Activated CD4-positive, alpha-beta T cell treated with anti-CD3 and anti-CD28 coated beads for 36 hours (primary cell): ENCODE measurements at regions of chr22 and their contacts with region 1.

Region 1: DNA sequence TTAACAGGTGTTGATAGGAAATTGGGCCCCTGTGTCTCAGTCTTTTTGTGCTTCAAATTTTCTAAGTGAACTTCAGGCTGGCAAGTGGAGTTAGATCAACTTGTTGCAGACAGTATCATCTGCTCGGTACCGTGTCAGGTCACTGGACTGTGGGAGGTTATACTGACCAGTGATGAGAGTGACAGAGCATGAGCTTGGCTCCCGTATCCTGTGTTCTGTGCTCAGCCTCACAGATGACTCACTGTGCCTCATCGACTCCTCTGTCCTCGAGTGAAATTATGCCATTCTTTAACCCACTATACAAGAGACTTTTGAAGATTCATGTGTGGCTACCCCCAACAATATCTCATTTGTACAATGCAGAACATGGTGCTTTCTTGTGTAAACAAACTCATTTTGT is 7.9 kb downstream of the GRAP2 start:
- DNase-seq: peak; percentile 71
- ATAC-seq: peak; percentile 50
- H3K4me3 Mint-ChIP-seq: peak overlapping the region; percentile 86
- H3K27ac Mint-ChIP-seq: peak overlapping the region; percentile 100
- H3K4me1 Mint-ChIP-seq: peaks cover 75% of the 10 kb centered on the region
- H3K27me3 Mint-ChIP-seq: no peaks in the 10 kb centered on the region

Region 2: GRCh38 chr22:39723899-39724351 is 184.8 kb before region 1 on chr22:
- CTCF ChIA-PET with region 1: no interaction called
- POLR2A ChIA-PET with region 1: no interaction called
- intact Hi-C with region 1: no loop called
- DNase-seq: no peak
- ATAC-seq: no peak
- H3K4me3 Mint-ChIP-seq: no peak overlapping the region
- H3K27ac Mint-ChIP-seq: no peak overlapping the region
- H3K4me1 Mint-ChIP-seq: no peaks in the 10 kb centered on the region
- H3K27me3 Mint-ChIP-seq: no peaks in the 10 kb centered on the region

Region 3: GRCh38 chr22:39839917-39840510 is 68.7 kb before region 1 on chr22:
- CTCF ChIA-PET with region 1: no interaction called
- POLR2A ChIA-PET with region 1: no interaction called
- intact Hi-C with region 1: loop called (anchors 2 kb)
- DNase-seq: peak; percentile 64
- ATAC-seq: peak; percentile 100
- H3K4me3 Mint-ChIP-seq: no peak overlapping the region
- H3K27ac Mint-ChIP-seq: no peak overlapping the region
- H3K4me1 Mint-ChIP-seq: peaks cover 16% of the 10 kb centered on the region
- H3K27me3 Mint-ChIP-seq: peaks cover 2% of the 10 kb centered on the region

Region 4: DNA sequence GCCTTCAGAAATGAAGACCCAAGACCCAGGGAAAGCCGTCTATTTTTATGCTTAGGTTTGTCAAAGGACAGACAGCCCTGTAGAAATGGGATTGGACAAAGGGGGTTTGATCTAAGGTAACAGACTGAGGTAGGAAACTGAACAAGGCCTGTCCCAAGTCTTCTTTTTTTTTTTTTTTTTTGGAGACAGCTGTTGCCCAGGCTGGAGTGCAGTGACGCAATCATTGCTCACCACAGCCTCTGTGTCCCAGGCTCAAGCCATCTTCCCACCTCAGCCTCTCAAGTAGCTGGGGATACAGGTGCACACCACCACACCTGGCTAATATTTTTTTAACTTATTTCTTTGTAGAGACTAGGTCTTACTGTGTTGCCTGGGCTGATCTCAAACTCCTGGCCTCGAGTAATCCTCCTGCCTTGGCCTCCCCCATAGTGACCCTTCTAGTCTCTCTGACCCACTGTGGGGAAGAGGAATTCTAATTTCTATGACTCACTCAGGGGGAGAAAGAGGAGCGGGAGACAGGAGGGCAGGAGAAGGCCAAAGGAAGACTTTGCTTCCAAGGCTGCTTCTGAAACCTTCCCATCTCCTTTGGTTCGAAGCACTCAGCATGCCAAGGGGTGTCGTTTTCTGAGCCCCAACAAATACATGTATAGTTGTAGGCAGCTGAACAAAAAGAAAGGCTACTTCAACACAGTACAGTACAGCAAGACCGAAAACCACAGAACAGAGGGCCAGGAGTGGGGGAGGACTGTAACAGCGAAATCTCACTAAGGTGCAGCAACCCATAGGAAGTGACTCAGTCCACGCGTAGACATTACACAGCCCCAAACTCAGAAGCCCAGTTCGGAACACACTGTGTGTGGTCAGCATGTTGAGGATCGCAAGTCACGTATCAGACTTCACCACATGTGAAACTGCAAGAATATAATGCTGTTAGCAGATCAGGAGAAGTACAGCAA is 52.3 kb after region 1 on chr22:
- CTCF ChIA-PET with region 1: interaction called, 3 read pairs
- POLR2A ChIA-PET with region 1: no interaction called
- intact Hi-C with region 1: loop called in 1 of 2 experiments (anchors 2 kb)
- DNase-seq: peak; percentile 85
- ATAC-seq: peak; percentile 95
- H3K4me3 Mint-ChIP-seq: peak overlapping the region; percentile 27
- H3K27ac Mint-ChIP-seq: peak overlapping the region; percentile 78
- H3K4me1 Mint-ChIP-seq: peaks cover 65% of the 10 kb centered on the region
- H3K27me3 Mint-ChIP-seq: no peaks in the 10 kb centered on the region